Thyroid gland (tissue), 4 donors: ENCODE measurements at regions of chr4 and their contacts with region 1.

Region 1: DNA sequence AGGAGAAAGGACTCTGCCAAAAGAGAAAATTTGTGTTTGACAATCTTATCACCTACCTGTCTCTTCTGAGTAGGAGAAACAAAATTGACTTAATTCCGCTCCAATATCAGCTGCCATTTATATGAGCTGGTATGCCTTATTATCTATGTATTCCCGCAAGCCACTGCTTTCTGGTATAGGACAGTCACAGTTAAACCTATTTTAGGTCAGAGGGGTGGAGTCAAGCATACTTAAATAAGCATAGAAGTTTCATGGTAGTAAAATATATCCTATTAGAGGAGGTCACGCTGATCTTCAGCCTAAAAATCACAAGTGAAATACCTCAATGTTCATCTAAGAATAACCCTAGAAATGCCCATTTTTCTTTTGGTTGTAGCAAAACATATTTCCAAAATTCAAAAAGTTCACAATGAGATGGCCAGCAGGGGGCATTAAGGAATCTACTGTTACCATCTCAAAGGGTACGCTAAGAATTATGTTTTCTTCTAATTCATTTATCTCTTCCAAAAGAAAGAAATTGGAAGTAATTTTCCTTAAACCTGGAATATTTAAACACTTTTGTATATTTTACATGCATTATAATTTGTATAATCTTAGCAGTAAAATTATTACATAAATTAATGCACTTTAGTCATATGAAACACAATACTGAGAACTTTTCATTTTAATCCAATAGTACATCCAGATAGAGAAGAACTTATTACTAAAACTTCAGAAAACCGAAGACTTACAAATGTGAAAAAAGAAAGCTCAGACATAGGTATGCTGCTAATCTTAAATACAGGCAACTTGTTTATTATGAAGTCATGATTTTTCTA is 10.5 kb downstream of the PPAT start:
- DNase-seq: peak; percentile 12 to 22
- H3K4me3 ChIP-seq: no peak overlapping the region
- H3K27ac ChIP-seq: no peak overlapping the region
- H3K4me1 ChIP-seq: no peaks in the 10 kb centered on the region
- H3K27me3 ChIP-seq: no peaks in the 10 kb centered on the region
- CTCF ChIP-seq: peak in 5 of 6 experiments; percentile 33 to 67 (median 51)
- POLR2A ChIP-seq: no peak

Region 2: DNA sequence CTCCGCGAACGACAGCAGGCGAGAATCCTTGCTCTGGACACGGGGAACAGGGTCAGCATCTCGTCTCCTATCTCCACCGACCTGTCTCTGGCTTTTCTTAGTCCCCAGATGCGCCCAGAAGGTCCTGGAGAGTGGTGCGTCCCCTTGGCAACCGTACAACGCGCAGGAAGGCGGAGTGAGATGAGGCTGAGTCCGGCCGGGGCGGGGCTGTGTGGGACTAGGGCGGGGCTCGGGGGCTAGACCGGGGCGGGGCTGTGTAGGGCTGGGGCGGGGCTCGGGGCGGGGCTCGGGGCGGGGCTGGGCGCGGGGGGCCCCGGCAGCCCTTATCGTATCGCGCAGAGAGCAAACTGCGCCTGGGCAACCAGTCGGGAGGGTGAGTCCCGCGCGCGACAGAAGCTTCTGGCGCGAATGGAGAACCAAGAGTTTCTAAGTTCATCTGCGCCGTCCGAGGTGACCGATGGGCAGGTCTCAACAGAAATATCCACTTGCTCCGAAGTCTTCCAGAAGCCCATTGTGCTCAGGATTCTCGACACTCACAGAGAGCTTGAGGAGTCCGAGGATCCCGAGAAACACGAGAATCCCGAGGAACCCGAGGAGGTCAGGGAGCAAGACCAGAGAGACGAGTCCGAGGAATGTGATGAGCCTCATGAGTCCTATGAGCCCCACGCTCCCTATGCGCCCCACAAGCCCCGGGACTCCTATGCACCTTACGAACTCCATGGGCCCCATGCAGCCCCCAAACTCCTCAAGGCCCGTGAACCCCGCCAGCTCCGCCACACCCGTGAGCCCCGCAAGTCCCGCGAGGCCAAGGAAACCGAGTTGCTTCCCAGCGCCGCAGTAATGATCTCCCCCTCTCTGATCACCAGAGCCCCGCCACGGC is 105.6 kb after region 1 on chr4:
- intact Hi-C with region 1: loop called (anchors 10 kb)
- DNase-seq: peak; percentile 78 to 82
- H3K4me3 ChIP-seq: peak overlapping the region in 2 of 3 donors; percentile 16 to 45
- H3K27ac ChIP-seq: no peak overlapping the region
- H3K4me1 ChIP-seq: peaks cover 0 to 4% of the 10 kb centered on the region in 2 donors
- H3K27me3 ChIP-seq: no peaks in the 10 kb centered on the region
- CTCF ChIP-seq: no peak
- POLR2A ChIP-seq: peak in 1 of 2 donors; percentile 18

Region 3: DNA sequence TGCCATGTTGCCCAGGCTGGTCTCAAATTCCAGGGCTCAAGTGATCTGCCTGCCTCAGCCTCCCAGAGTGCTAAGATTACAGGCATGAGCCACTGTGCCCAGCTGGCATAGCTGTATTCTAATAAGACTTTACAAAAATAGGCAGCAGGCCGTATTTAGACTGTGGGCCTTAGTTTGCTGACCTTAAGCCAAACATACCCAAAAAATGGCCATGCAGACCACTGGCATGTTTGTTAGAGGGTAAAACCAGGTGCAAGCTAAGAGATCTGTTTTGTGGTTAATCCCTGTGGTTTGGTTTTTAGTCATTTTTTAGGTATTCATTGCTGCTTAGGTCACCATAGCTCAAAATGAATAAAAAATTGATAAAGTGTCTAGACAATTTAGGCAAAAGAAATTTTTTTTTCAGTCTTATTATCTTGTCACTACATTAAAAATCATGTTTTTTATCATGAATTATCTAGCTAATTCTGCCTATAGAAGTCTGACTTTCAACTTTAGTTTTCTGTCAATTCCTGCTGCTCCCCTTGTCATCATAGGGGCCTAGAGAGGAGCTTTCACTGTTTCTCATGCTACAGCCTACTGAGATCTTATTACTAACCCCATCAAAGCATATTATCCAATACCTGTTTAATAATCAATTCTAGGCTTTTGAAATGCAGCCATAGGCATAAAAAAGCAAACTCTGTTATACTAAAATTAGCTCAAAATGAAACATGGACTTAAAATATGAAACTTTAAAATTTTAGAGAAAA is 404.1 kb after region 1 on chr4:
- intact Hi-C with region 1: loop called (anchors 10 kb)
- DNase-seq: no peak
- H3K4me3 ChIP-seq: no peak overlapping the region
- H3K27ac ChIP-seq: no peak overlapping the region
- H3K4me1 ChIP-seq: no peaks in the 10 kb centered on the region
- H3K27me3 ChIP-seq: no peaks in the 10 kb centered on the region
- CTCF ChIP-seq: no peak
- POLR2A ChIP-seq: no peak